Caco-2 (cell line): ENCODE measurements at regions of chr20 and their contacts with region 1.

Region 1: GRCh38 chr20:23889775-23890211 is 10.2 kb upstream of the CST5 start:
- DNase-seq: peak; percentile 78 to 80
- H3K4me3 ChIP-seq: no peak overlapping the region
- H3K4me3 Mint-ChIP-seq: no peak overlapping the region
- H3K27ac Mint-ChIP-seq: no peak overlapping the region
- H3K4me1 ChIP-seq: peaks cover under 1% of the 10 kb centered on the region; the same call in 1 of the 2 replicates
- H3K4me1 Mint-ChIP-seq: no peaks in the 10 kb centered on the region
- H3K27me3 ChIP-seq: no peaks in the 10 kb centered on the region
- H3K27me3 Mint-ChIP-seq: peaks cover 8% of the 10 kb centered on the region
- CTCF ChIP-seq: peak; percentile 79 to 86

Region 2: DNA sequence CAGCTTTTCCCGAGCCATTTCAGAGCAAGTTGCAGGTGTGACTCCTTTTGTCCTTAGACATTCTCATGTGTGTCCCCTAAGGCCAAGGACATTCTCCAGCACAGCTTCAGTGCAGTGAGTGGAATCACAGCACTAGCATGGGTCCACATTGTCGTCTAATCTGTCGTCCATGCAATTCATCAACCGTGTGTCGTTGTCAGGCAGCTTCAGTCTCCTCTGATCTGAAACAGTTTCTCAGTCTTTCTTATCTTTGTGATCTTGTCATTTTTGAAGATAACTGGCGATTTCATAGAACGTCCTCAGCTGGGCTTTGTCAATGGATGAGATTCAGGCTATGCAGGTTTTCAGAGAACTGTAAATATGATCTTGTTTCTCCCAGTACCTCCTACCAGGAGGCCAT is 95.0 kb before region 1 on chr20:
- CTCF ChIA-PET with region 1: interaction called, 3 read pairs
- POLR2A ChIA-PET with region 1: no interaction called
- intact Hi-C with region 1: loop called (anchors 5 kb)
- DNase-seq: peak; percentile 51 to 68
- H3K4me3 ChIP-seq: no peak overlapping the region
- H3K4me3 Mint-ChIP-seq: no peak overlapping the region
- H3K27ac Mint-ChIP-seq: no peak overlapping the region
- H3K4me1 ChIP-seq: peaks cover 9% of the 10 kb centered on the region; the same call in 1 of the 2 replicates
- H3K4me1 Mint-ChIP-seq: peaks cover 14% of the 10 kb centered on the region
- H3K27me3 ChIP-seq: no peaks in the 10 kb centered on the region
- H3K27me3 Mint-ChIP-seq: peaks cover 4% of the 10 kb centered on the region
- CTCF ChIP-seq: no peak

Region 3: DNA sequence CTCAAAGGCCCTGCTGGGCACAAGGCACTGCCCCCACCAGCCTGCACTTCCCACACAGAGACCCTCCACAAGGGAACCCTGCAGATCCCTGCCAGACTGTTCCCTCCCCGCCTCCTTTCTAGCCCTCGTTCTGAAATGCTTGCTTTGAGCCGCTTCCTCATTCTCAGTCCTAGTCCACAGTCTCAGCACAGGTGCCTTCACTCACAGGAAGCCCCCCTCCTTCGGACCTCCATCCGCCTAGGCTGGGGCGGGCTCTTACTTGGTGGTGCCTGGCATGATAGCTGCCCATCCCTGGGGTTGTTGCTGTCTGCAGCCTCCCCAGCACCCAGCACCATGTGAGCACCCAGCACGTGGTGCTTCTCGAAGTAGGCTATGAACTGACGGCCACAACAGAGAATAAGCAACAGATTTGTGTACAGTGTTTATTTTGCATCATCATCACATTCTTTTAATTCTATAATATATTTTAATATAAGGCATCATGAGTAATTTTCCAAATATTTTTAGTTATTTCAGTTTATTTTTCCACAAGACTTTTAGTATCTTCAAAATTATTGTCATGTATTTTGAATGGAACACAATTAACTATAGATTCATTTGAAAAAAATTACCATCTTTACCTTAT is 22.5 kb before region 1 on chr20:
- CTCF ChIA-PET with region 1: no interaction called
- POLR2A ChIA-PET with region 1: no interaction called
- intact Hi-C with region 1: no loop called
- DNase-seq: no peak
- H3K4me3 ChIP-seq: no peak overlapping the region
- H3K4me3 Mint-ChIP-seq: no peak overlapping the region
- H3K27ac Mint-ChIP-seq: no peak overlapping the region
- H3K4me1 ChIP-seq: peaks cover 16% of the 10 kb centered on the region
- H3K4me1 Mint-ChIP-seq: peaks cover 35% of the 10 kb centered on the region
- H3K27me3 ChIP-seq: no peaks in the 10 kb centered on the region
- H3K27me3 Mint-ChIP-seq: peaks cover 2% of the 10 kb centered on the region
- CTCF ChIP-seq: no peak

Region 4: GRCh38 chr20:23928788-23929187 is 39.0 kb after region 1 on chr20:
- CTCF ChIA-PET with region 1: no interaction called
- POLR2A ChIA-PET with region 1: no interaction called
- intact Hi-C with region 1: loop called (anchors 5 kb)
- DNase-seq: no peak
- H3K4me3 ChIP-seq: no peak overlapping the region
- H3K4me3 Mint-ChIP-seq: no peak overlapping the region
- H3K27ac Mint-ChIP-seq: no peak overlapping the region
- H3K4me1 ChIP-seq: peaks cover 7% of the 10 kb centered on the region; the same call in 1 of the 2 replicates
- H3K4me1 Mint-ChIP-seq: no peaks in the 10 kb centered on the region
- H3K27me3 ChIP-seq: no peaks in the 10 kb centered on the region
- H3K27me3 Mint-ChIP-seq: peaks cover 9% of the 10 kb centered on the region
- CTCF ChIP-seq: no peak

Region 5: DNA sequence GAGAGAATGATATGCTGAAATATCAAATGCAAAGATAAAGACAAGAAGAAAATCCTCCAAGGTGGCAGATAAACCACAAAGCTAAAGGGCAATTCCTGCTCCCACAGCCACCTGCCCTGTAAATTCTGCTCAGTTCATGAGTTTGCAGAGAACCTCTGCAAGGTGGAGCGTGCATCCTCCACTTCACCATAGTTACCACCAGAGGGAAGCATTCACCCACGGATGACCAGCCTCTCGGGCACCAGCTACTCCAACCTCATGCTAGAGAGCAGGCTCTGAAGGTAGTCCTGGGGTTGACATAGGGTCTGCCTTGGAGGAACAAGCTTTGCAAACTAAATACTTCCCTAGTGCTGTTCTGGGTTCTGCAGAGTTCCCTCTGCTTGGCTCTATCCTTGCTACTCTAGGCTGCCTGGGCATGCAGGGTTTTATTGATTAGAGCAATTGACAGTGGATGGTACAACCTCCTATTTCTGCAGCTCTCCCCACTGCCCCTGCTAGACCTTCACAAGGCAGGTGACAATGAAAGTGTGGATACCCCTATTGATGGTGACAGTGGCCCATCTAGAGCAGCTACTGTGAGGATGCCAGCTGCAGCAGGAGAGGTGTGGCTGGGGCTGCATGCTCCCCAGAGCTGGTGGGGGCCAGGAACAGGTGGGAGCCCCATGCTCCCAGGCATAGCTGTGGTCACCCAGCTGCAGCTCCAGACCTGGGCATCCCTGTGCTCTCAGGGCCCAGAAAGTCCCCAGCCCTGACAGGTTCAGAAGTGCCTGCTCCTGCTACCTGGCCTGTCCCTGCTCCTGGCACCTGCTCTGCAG is 47.7 kb after region 1 on chr20:
- CTCF ChIA-PET with region 1: interaction called, 5 read pairs
- POLR2A ChIA-PET with region 1: no interaction called
- intact Hi-C with region 1: loop called (anchors 2 kb)
- DNase-seq: peak; percentile 76 to 79
- H3K4me3 ChIP-seq: no peak overlapping the region
- H3K4me3 Mint-ChIP-seq: no peak overlapping the region
- H3K27ac Mint-ChIP-seq: no peak overlapping the region
- H3K4me1 ChIP-seq: no peaks in the 10 kb centered on the region
- H3K4me1 Mint-ChIP-seq: no peaks in the 10 kb centered on the region
- H3K27me3 ChIP-seq: no peaks in the 10 kb centered on the region
- H3K27me3 Mint-ChIP-seq: peaks cover 6% of the 10 kb centered on the region
- CTCF ChIP-seq: peak; percentile 83 to 90

Region 6: GRCh38 chr20:24164360-24164759 is 274.6 kb after region 1 on chr20:
- CTCF ChIA-PET with region 1: no interaction called
- POLR2A ChIA-PET with region 1: no interaction called
- intact Hi-C with region 1: loop called (anchors 1 kb)
- DNase-seq: peak; percentile 54 to 67
- H3K4me3 ChIP-seq: no peak overlapping the region
- H3K4me3 Mint-ChIP-seq: no peak overlapping the region
- H3K27ac Mint-ChIP-seq: no peak overlapping the region
- H3K4me1 ChIP-seq: no peaks in the 10 kb centered on the region
- H3K4me1 Mint-ChIP-seq: no peaks in the 10 kb centered on the region
- H3K27me3 ChIP-seq: no peaks in the 10 kb centered on the region
- H3K27me3 Mint-ChIP-seq: peaks cover 3% of the 10 kb centered on the region
- CTCF ChIP-seq: peak; percentile 56 to 80